HCT116 (cell line): ENCODE measurements at regions of chr10 and their contacts with region 1.

Region 1: DNA sequence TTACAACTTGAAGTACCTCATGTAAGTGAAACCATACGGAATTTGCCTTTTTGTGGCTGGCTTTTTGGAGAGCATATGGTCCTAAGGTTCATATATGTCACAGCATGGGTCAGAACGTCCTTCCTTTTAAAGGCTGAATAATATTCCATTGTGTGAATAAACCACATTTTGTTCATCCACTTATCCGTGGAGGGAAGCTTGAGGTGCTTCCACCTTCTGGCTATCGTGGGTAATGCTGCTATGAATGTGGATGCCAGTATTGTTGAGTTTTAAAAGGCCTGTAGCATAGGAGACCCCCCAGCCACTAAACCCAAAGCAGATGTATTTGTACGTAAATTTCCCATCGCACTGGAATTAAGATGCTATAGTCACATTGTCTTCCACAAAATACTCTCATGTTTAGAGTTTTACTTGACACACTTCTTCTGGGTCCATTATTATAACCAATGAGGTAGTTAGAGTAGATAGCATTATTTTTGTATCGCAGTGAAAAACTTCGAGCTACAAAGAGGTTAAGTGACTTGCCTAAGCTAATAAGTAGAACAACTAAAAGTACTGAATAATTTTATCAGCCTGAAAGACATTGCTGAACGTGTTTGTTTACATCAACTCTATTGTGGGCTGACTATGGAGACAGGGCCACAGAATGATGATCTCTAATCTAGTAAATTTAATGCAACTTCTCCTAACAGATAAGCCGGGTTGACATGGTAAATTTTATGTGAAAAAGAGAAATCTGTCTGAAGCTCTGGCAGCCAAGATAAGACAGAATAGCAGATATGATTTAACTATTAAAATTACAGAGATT is 183.0 kb upstream of the CTBP2 start:
- DNase-seq: peak; percentile 51
- ATAC-seq: peak; percentile 90
- H3K4me3 ChIP-seq: no peak overlapping the region
- H3K27ac ChIP-seq: no peak overlapping the region
- H3K4me1 ChIP-seq: no peaks in the 10 kb centered on the region
- H3K27me3 ChIP-seq: no peaks in the 10 kb centered on the region
- CTCF ChIP-seq: peak; percentile 80 to 87 (median 86)
- POLR2A ChIP-seq: no peak
- RAD21 ChIP-seq: peak; percentile 88

Region 2: GRCh38 chr10:124992462-124993344 is 350.6 kb before region 1 on chr10:
- CTCF ChIA-PET with region 1: interaction called, 3 read pairs
- POLR2A ChIA-PET with region 1: no interaction called
- RAD21 ChIA-PET with region 1: no interaction called
- intact Hi-C with region 1: loop called (anchors 10 kb)
- DNase-seq: peak; percentile 43
- ATAC-seq: peak; percentile 86
- H3K4me3 ChIP-seq: no peak overlapping the region
- H3K27ac ChIP-seq: no peak overlapping the region
- H3K4me1 ChIP-seq: no peaks in the 10 kb centered on the region
- H3K27me3 ChIP-seq: no peaks in the 10 kb centered on the region
- CTCF ChIP-seq: peak; percentile 49 to 68 (median 66); a peak in 5 of 6 replicates
- POLR2A ChIP-seq: no peak
- RAD21 ChIP-seq: peak; percentile 78

Region 3: GRCh38 chr10:125038637-125039036 is 304.7 kb before region 1 on chr10:
- CTCF ChIA-PET with region 1: no interaction called
- POLR2A ChIA-PET with region 1: no interaction called
- RAD21 ChIA-PET with region 1: no interaction called
- intact Hi-C with region 1: loop called (anchors 1 kb)
- DNase-seq: peak; percentile 74
- ATAC-seq: peak; percentile 92
- H3K4me3 ChIP-seq: 0 out of 4 replicates have a peak overlapping the region, but pooled peaks of 1 of the 2 experiments have one; percentile 3
- H3K27ac ChIP-seq: peak overlapping the region; percentile 15
- H3K4me1 ChIP-seq: peaks cover 62 to 83% of the 10 kb centered on the region in 2 experiments
- H3K27me3 ChIP-seq: no peaks in the 10 kb centered on the region
- CTCF ChIP-seq: peak in 2 of 3 experiments; percentile 71 to 75; a peak in 4 of 6 replicates
- POLR2A ChIP-seq: no peak
- RAD21 ChIP-seq: no peak

Region 4: GRCh38 chr10:125160856-125161706 is 182.2 kb before region 1 on chr10:
- CTCF ChIA-PET with region 1: no interaction called
- POLR2A ChIA-PET with region 1: no interaction called
- RAD21 ChIA-PET with region 1: no interaction called
- intact Hi-C with region 1: loop called (anchors 2 kb)
- DNase-seq: peak; percentile 82
- ATAC-seq: peak; percentile 79
- H3K4me3 ChIP-seq: peak overlapping the region; percentile 64 to 77
- H3K27ac ChIP-seq: peak overlapping the region; percentile 99
- H3K4me1 ChIP-seq: peaks cover 29 to 42% of the 10 kb centered on the region in 2 experiments
- H3K27me3 ChIP-seq: no peaks in the 10 kb centered on the region
- CTCF ChIP-seq: peak in 2 of 3 experiments; percentile 44 to 47; a peak in 4 of 6 replicates
- POLR2A ChIP-seq: peak; percentile 36
- RAD21 ChIP-seq: no peak

Region 5: GRCh38 chr10:125707541-125708468 is 364.5 kb after region 1 on chr10:
- CTCF ChIA-PET with region 1: no interaction called
- POLR2A ChIA-PET with region 1: no interaction called
- RAD21 ChIA-PET with region 1: no interaction called
- intact Hi-C with region 1: no loop called
- DNase-seq: peak; percentile 18
- ATAC-seq: peak; percentile 91
- H3K4me3 ChIP-seq: no peak overlapping the region
- H3K27ac ChIP-seq: no peak overlapping the region
- H3K4me1 ChIP-seq: peaks cover 19 to 21% of the 10 kb centered on the region in 2 experiments
- H3K27me3 ChIP-seq: no peaks in the 10 kb centered on the region
- CTCF ChIP-seq: no peak
- POLR2A ChIP-seq: no peak
- RAD21 ChIP-seq: no peak

Region 6: DNA sequence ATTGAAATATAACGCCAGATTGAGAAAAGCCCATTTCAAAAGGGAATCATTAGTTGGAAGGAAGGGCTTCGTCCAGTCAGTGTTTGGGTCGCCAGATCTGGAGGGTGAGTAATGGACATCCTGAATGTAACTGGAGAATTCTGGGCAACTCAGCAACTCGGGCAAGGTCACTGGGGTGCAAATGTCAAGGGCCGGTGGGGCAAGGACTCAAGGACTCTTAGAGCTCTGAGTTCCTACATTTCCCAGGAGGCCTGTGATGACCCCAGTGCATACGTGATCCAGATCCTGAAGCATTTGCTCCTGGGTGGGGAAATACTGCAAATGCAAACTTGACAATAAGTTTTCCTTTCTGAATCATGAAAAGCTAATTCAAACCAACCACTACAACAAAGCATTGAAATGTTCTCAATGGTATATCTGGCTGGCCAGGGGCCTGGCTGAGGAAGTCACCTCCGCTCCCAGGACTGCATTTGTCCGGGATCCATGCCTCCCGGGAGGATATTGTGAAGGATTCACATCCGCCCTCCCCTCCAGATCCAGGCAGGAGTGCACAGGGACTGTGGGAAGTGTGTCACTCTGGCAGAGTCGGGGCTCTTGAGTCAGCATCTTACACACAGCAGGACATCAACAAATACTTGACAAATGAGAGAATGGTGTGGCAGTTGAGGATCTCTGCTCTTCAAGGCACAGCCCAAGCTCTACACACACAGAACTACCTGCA is 717.1 kb after region 1 on chr10:
- CTCF ChIA-PET with region 1: no interaction called
- POLR2A ChIA-PET with region 1: no interaction called
- RAD21 ChIA-PET with region 1: no interaction called
- intact Hi-C with region 1: no loop called
- DNase-seq: no peak
- ATAC-seq: no peak
- H3K4me3 ChIP-seq: no peak overlapping the region
- H3K27ac ChIP-seq: no peak overlapping the region
- H3K4me1 ChIP-seq: peaks cover 17 to 23% of the 10 kb centered on the region in 2 experiments
- H3K27me3 ChIP-seq: peaks cover 63% of the 10 kb centered on the region
- CTCF ChIP-seq: no peak
- POLR2A ChIP-seq: no peak
- RAD21 ChIP-seq: no peak